GM18951 (cell line): ENCODE measurements at regions of chr2 and their contacts with region 1.

Region 1: GRCh38 chr2:200901459-200902072 is 12.4 kb downstream of the NIF3L1 start:
- POLR2A ChIP-seq: no peak

Region 2: GRCh38 chr2:201071479-201072200 is 170.1 kb after region 1 on chr2 and contains the starts of genes HYCC2 and NDUFB3:
- in situ Hi-C with region 1: loop called (anchors 10 kb)
- POLR2A ChIP-seq: peak; percentile 72

Region 3: GRCh38 chr2:201167546-201167945 is 266.0 kb after region 1 on chr2:
- in situ Hi-C with region 1: loop called (anchors 5 kb)
- POLR2A ChIP-seq: no peak

Region 4: GRCh38 chr2:201363857-201364560 is 462.4 kb after region 1 on chr2:
- in situ Hi-C with region 1: loop called (anchors 25 kb)
- POLR2A ChIP-seq: no peak